K562 (cell line): ENCODE measurements at regions of chr13 and their contacts with region 1.

Region 1: GRCh38 chr13:23020223-23020843 is 160.4 kb upstream of the SGCG start:
- DNase-seq: peak; percentile 17 to 68 (median 22)
- ATAC-seq: peak; percentile 87
- H3K4me3 ChIP-seq: no peak overlapping the region
- H3K27ac ChIP-seq: no peak overlapping the region
- H3K4me1 ChIP-seq: no peaks in the 10 kb centered on the region
- H3K27me3 ChIP-seq: no peaks in the 10 kb centered on the region; a peak in 3 of 5 replicates
- CTCF ChIP-seq: peak; percentile 50 to 64 (median 60); a peak in 5 of 6 replicates
- EP300 ChIP-seq: no peak
- POLR2A ChIP-seq: no peak
- RAD21 ChIP-seq: peak; percentile 54 to 78

Region 2: GRCh38 chr13:22944378-22944777 is 76.0 kb before region 1 on chr13:
- CTCF ChIA-PET with region 1: no interaction called
- POLR2A ChIA-PET with region 1: no interaction called
- in situ Hi-C with region 1: no loop called
- intact Hi-C with region 1: no loop called
- DNase-seq: peak in 1 of 4 experiments; percentile 24
- ATAC-seq: peak; percentile 95
- H3K4me3 ChIP-seq: no peak overlapping the region
- H3K27ac ChIP-seq: no peak overlapping the region
- H3K4me1 ChIP-seq: peaks cover 0 to 7% of the 10 kb centered on the region in 2 experiments; a peak in 1 of 5 replicates
- H3K27me3 ChIP-seq: no peaks in the 10 kb centered on the region
- CTCF ChIP-seq: peak; percentile 15 to 42 (median 29); a peak in 2 of 6 replicates
- EP300 ChIP-seq: no peak
- POLR2A ChIP-seq: no peak
- RAD21 ChIP-seq: no peak

Region 3: DNA sequence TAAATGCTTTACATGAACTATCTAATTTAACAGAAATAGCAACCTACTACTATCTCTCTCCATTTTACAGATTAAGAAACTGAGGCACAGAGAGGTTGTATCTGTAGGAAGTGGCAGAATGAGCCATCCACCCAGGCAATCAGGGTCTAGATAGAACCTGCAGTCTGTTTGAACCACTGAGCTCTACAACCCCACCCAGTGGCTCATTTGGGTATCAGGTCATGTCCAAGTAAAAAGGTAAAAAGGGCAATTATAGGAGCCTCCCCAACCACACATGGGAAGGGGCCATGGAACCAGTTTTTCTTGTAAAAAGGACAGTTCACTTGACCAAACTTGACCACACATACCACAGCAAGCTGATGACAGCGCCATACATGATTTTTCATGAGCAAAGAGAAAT is 67.5 kb after region 1 on chr13:
- CTCF ChIA-PET with region 1: no interaction called
- POLR2A ChIA-PET with region 1: no interaction called
- in situ Hi-C with region 1: no loop called
- intact Hi-C with region 1: no loop called
- DNase-seq: peak; percentile 13 to 50 (median 23)
- ATAC-seq: peak; percentile 70; the same call in 2 of the 3 replicates
- H3K4me3 ChIP-seq: no peak overlapping the region
- H3K27ac ChIP-seq: no peak overlapping the region
- H3K4me1 ChIP-seq: no peaks in the 10 kb centered on the region
- H3K27me3 ChIP-seq: no peaks in the 10 kb centered on the region
- CTCF ChIP-seq: peak; percentile 36 to 54 (median 49)
- EP300 ChIP-seq: no peak
- POLR2A ChIP-seq: no peak
- RAD21 ChIP-seq: peak in 1 of 2 experiments; percentile 51; a peak in 2 of 4 replicates

Region 4: DNA sequence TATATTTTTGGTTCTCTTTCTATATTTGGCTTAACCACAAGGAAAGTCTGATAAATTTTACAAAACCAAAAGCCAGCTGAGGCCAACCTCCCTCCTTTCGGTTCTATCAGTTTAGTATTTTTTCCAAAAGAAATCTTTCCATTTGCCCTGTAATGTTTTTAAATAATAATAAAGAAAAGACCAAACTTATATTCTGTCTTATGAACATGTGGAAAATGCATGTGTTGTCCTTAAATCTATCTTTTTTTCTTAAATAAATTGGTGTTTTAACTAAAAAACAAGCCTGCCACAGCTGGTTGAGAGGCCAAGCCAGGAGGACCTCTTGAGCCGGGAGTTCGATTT is 299.5 kb after region 1 on chr13:
- CTCF ChIA-PET with region 1: no interaction called
- POLR2A ChIA-PET with region 1: no interaction called
- in situ Hi-C with region 1: no loop called
- intact Hi-C with region 1: loop called (anchors 10 kb)
- DNase-seq: no peak
- ATAC-seq: no peak
- H3K4me3 ChIP-seq: no peak overlapping the region
- H3K27ac ChIP-seq: no peak overlapping the region
- H3K4me1 ChIP-seq: no peaks in the 10 kb centered on the region; a peak in 1 of 5 replicates
- H3K27me3 ChIP-seq: no peaks in the 10 kb centered on the region
- CTCF ChIP-seq: no peak
- EP300 ChIP-seq: no peak
- POLR2A ChIP-seq: no peak
- RAD21 ChIP-seq: no peak